Colonic mucosa (tissue), 4 donors: ENCODE measurements at regions of chr4 and their contacts with region 1.

Region 1: DNA sequence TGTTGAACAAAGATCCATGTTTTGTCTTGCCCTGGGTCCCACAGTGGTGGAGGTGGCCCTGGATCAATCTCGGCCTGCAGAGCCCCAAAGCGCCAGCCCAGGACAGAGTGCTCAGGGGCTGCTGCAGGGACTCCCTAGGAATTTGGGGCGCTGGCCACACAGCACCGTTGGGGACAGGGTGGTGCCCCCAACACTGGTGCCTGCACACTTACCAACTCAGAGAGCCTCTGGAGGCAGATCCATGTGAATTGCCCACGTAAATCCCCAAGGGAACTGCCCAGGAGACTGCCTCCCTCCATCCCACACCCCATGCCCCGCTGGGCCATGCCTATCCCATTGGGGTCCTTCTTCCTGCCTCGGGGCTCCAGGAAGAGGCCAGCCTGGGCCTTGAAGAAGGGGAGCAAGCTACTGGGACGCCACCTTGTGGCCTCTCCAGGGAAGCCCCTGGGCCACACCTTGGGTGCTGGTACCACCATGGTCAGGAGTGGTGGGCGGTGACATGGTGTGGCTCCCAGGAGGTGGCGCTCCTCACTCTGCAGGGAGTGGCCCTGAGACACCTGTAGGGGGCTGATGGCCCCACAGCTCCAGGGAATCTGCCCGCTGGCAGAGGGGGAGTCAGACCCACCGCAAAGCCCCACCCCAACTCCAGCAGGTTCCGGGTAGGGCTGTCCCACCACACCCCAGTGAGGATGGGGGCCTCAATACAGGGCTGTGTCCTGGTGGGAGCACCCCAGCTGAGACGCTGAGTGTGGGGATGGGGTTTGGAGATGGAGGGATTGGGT is 22.8 kb downstream of the CFAP99 start:
- DNase-seq: peak; percentile 63
- H3K4me3 ChIP-seq: no peak overlapping the region
- H3K27ac ChIP-seq: no peak overlapping the region
- H3K4me1 ChIP-seq: no peaks in the 10 kb centered on the region
- H3K27me3 ChIP-seq: no peaks in the 10 kb centered on the region
- CTCF ChIP-seq: peak; percentile 88

Region 2: GRCh38 chr4:2220016-2220630 is 221.5 kb before region 1 on chr4:
- intact Hi-C with region 1: loop called (anchors 5 kb)
- DNase-seq: peak; percentile 75
- H3K4me3 ChIP-seq: no peak overlapping the region
- H3K27ac ChIP-seq: no peak overlapping the region
- H3K4me1 ChIP-seq: no peaks in the 10 kb centered on the region
- H3K27me3 ChIP-seq: no peaks in the 10 kb centered on the region
- CTCF ChIP-seq: peak; percentile 79

Region 3: DNA sequence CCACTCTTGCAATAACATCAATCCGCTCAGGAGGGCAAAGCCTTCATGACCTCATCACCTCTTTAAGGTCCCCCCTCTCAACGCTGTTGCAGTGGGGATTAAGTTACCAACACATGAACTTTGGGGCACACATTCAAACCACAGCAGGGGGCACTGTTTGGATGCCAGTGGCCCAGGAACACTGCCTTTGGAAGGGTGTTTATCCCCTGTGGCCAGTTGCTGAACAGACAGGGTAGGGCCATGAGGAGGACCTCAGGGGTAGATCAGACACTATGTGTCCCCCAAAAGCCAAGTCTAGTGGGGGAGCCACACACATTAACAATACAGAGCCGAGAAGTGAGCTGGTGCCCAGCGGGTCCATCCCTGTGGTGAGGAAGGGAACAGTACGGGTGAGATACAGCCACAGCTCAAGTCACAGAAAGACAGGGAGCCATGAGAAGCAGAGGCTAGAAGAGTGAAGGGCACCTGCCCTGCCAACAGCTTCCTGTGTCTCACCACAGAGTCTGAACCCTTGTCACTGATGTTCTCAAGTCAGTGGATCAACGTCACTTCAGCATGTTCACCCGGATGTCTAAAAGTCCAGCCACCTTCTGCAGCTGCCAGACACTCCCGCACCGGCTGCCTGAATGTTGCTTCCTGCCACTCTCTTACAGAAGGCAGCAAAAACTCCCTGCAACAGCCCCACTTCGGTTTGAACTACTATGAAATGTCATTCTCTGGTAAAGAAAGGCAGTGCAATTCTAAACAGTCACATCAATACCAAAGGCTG is 159.8 kb before region 1 on chr4:
- intact Hi-C with region 1: loop called (anchors 5 kb)
- DNase-seq: no peak
- H3K4me3 ChIP-seq: no peak overlapping the region
- H3K27ac ChIP-seq: no peak overlapping the region
- H3K4me1 ChIP-seq: no peaks in the 10 kb centered on the region
- H3K27me3 ChIP-seq: no peaks in the 10 kb centered on the region
- CTCF ChIP-seq: no peak

Region 4: GRCh38 chr4:2689825-2690700 is 248.5 kb after region 1 on chr4:
- intact Hi-C with region 1: no loop called
- DNase-seq: no peak
- H3K4me3 ChIP-seq: no peak overlapping the region
- H3K27ac ChIP-seq: no peak overlapping the region
- H3K4me1 ChIP-seq: no peaks in the 10 kb centered on the region
- H3K27me3 ChIP-seq: no peaks in the 10 kb centered on the region
- CTCF ChIP-seq: no peak

Region 5: GRCh38 chr4:2800691-2801596 is 359.4 kb after region 1 on chr4:
- intact Hi-C with region 1: no loop called
- DNase-seq: peak; percentile 56
- H3K4me3 ChIP-seq: no peak overlapping the region
- H3K27ac ChIP-seq: peak overlapping the region; percentile 73
- H3K4me1 ChIP-seq: peaks cover 67% of the 10 kb centered on the region
- H3K27me3 ChIP-seq: no peaks in the 10 kb centered on the region
- CTCF ChIP-seq: no peak